Mammary epithelial cell (primary cell): ENCODE measurements at regions of chr12 and their contacts with region 1.

Region 1: GRCh38 chr12:89949457-89950195 is 241.0 kb upstream of the ATP2B1 start:
- DNase-seq: peak; percentile 91
- H3K4me3 ChIP-seq: no peak overlapping the region
- H3K27ac ChIP-seq: peak overlapping the region; percentile 91
- H3K4me1 ChIP-seq: peaks cover 46% of the 10 kb centered on the region
- H3K27me3 ChIP-seq: no peaks in the 10 kb centered on the region
- CTCF ChIP-seq: peak; percentile 15 to 41

Region 2: DNA sequence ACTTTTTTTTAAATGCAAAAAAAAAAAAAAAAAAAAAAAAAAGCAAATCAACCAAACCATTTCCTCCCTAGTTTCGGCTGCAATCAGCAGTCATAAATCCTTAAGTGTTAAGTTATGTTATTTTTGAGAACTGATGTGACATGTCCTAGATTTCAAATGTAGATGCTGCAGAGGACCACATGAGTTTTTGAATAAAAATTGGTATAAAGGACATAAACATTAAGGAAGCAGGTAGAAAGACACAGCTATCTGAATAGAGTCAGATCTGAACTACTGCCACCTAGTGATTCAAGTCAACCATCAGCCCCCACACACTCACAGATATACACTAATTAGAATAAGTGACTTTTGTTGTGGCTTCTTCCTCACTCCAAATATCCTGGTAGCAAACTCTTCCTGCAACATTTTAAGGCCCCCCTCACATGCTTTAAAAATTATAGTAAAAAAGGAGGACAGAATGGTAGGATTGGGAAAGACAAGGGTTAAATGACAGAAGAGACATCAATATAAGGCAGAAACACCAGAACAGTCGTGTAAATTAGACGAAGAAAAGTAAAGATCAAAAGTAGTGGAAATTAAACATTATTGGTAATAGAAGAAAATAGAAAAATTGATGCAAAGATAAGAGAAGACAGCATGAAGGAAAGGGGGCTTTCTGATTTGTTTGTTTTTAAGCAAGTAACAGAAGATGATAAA is 153.5 kb after region 1 on chr12:
- CTCF ChIA-PET with region 1: no interaction called
- dilution Hi-C with region 1: no loop called
- in situ Hi-C with region 1: no loop called
- intact Hi-C with region 1: loop called (anchors 5 kb)
- DNase-seq: peak; percentile 43
- H3K4me3 ChIP-seq: no peak overlapping the region
- H3K27ac ChIP-seq: no peak overlapping the region
- H3K4me1 ChIP-seq: peaks cover 20% of the 10 kb centered on the region
- H3K27me3 ChIP-seq: no peaks in the 10 kb centered on the region
- CTCF ChIP-seq: peak; percentile 44 to 75